Ascending aorta (tissue), 2 donors: ENCODE measurements at regions of chr16 and their contacts with region 1.

Region 1: GRCh38 chr16:16062023-16062932 is 112.9 kb downstream of the ABCC1 start:
- DNase-seq: no peak
- H3K4me3 ChIP-seq: peak overlapping the region in 1 of 2 donors; percentile 4
- H3K27ac ChIP-seq: peak overlapping the region; percentile 71 to 75
- H3K4me1 ChIP-seq: peaks cover 5 to 25% of the 10 kb centered on the region in 2 donors
- H3K27me3 ChIP-seq: no peaks in the 10 kb centered on the region
- CTCF ChIP-seq: peak in 2 of 3 experiments; percentile 12 to 39

Region 2: GRCh38 chr16:16096121-16096857 is 34.0 kb after region 1 on chr16:
- intact Hi-C with region 1: loop called (anchors 5 kb)
- DNase-seq: peak in 1 of 2 donors; percentile 87
- H3K4me3 ChIP-seq: peak overlapping the region in 1 of 2 donors; percentile 23
- H3K27ac ChIP-seq: peak overlapping the region; percentile 83 to 89
- H3K4me1 ChIP-seq: peaks cover 11 to 36% of the 10 kb centered on the region in 2 donors
- H3K27me3 ChIP-seq: no peaks in the 10 kb centered on the region
- CTCF ChIP-seq: peak in 1 of 3 experiments; percentile 38

Region 3: GRCh38 chr16:17283016-17283415 is 1220.7 kb after region 1 on chr16:
- intact Hi-C with region 1: no loop called
- DNase-seq: no peak
- H3K4me3 ChIP-seq: no peak overlapping the region
- H3K27ac ChIP-seq: no peak overlapping the region
- H3K4me1 ChIP-seq: no peaks in the 10 kb centered on the region
- H3K27me3 ChIP-seq: no peaks in the 10 kb centered on the region
- CTCF ChIP-seq: no peak